Activated CD8-positive, alpha-beta memory T cell treated with anti-CD3 and anti-CD28 coated beads, Interleukin-2, amount 10 ng/mL, durations not matched to agents 7 days and 5 days (primary cell): ENCODE measurements at regions of chr12 and their contacts with region 1.

Region 1: GRCh38 chr12:108803428-108804105 is 53.8 kb downstream of the SSH1 start:
- DNase-seq: peak; percentile 77
- ATAC-seq: peak; percentile 91
- H3K4me3 Mint-ChIP-seq: no peak overlapping the region
- H3K27ac Mint-ChIP-seq: peak overlapping the region; percentile 36
- H3K4me1 Mint-ChIP-seq: peaks cover 16% of the 10 kb centered on the region
- H3K27me3 Mint-ChIP-seq: no peaks in the 10 kb centered on the region

Region 2: DNA sequence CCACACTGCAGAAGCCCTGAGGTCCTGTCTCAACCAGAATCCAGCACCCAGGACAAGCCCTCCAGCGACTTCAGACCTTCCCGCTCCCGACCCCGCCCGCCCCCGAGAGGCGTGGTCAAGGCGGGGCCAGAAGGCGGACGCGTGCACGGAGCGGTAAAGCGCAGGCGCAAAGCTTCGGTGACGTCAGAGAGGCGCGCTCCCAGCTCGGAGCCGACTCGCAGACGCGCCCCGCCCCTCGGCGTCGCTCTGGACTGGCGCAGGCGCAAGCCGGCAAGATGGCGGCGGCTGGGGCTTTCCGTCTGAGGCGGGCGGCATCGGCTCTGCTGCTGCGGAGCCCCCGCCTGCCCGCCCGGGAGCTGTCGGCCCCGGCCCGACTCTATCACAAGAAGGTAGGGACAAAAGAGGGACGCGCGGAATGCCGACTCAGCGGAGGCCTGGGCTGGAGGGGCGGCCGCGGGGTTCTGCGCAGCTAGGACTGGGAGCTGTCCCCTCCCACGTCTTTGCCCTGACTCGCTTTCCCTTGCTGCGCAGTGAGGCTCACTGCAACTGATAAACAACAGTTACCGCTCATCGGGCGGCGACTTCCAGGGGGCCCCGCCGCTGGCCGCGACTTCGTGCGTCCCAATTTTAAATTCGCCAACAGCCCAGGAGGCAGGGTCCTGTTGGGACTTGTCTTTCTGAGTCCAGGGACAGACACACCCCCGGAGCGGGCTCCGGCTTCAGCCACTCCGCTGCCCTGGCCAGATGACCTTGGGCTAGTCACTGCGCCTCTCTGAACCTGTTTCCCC is 241.0 kb before region 1 on chr12 and contains the start of gene ISCU:
- CTCF ChIA-PET with region 1: interaction called, 24 read pairs
- DNase-seq: peak; percentile 98
- ATAC-seq: peak; percentile 75
- H3K4me3 Mint-ChIP-seq: peak within 1 kb of the TSS; percentile 97
- H3K27ac Mint-ChIP-seq: peak within 1 kb of the TSS; percentile 99
- H3K4me1 Mint-ChIP-seq: peaks cover 62% of the 10 kb centered on the region
- H3K27me3 Mint-ChIP-seq: no peaks in the 10 kb centered on the region
- total RNA-seq, gene ISCU: 64.2 to 86.9 TPM

Region 3: GRCh38 chr12:108570743-108571608 is 232.6 kb before region 1 on chr12:
- CTCF ChIA-PET with region 1: interaction called, 24 read pairs
- DNase-seq: no peak
- ATAC-seq: no peak
- H3K4me3 Mint-ChIP-seq: no peak overlapping the region
- H3K27ac Mint-ChIP-seq: no peak overlapping the region
- H3K4me1 Mint-ChIP-seq: peaks cover 85% of the 10 kb centered on the region
- H3K27me3 Mint-ChIP-seq: peaks cover 3% of the 10 kb centered on the region

Region 4: GRCh38 chr12:108821407-108822397 is 18.1 kb after region 1 on chr12:
- CTCF ChIA-PET with region 1: interaction called, 12 read pairs
- DNase-seq: peak; percentile 72
- ATAC-seq: peak; percentile 79
- H3K4me3 Mint-ChIP-seq: peak overlapping the region; percentile 44
- H3K27ac Mint-ChIP-seq: peak overlapping the region; percentile 83
- H3K4me1 Mint-ChIP-seq: peaks cover 67% of the 10 kb centered on the region
- H3K27me3 Mint-ChIP-seq: no peaks in the 10 kb centered on the region